ENCODE measurements at regions of chr19 and their contacts with region 1.

Region 1: GRCh38 chr19:47428177-47428894 is 9.0 kb upstream of the MEIS3 start:
- DNase-seq: peak; percentile 89
- CTCF ChIP-seq: no peak

Region 2: DNA sequence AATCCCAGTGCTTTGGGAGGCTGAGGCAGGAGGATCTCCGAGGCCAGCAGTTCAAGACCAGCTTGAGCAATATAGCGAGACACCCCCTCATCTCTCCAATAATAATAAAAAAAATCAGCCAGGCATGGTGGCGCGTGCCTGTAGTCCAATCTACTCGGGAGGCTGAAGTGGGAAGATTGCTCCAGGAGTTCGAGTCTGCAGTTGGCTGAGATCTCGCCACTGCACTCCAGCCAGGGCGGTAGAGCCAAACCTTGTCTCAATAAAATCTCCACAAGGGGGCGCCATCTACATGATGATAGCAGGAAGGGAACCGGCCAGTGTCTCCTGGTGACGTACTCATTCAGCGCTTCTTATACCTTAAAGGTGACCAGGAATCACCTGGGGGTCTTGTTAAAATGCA is 132.3 kb before region 1 on chr19:
- CTCF ChIA-PET with region 1: interaction called, 17 read pairs
- POLR2A ChIA-PET with region 1: no interaction called
- DNase-seq: peak; percentile 83
- CTCF ChIP-seq: peak; percentile 76

Region 3: GRCh38 chr19:47348819-47349795 is 79.2 kb before region 1 on chr19 and contains the start of gene DHX34:
- CTCF ChIA-PET with region 1: interaction called, 20 read pairs
- POLR2A ChIA-PET with region 1: no interaction called
- DNase-seq: peak; percentile 100
- CTCF ChIP-seq: peak; percentile 93

Region 4: DNA sequence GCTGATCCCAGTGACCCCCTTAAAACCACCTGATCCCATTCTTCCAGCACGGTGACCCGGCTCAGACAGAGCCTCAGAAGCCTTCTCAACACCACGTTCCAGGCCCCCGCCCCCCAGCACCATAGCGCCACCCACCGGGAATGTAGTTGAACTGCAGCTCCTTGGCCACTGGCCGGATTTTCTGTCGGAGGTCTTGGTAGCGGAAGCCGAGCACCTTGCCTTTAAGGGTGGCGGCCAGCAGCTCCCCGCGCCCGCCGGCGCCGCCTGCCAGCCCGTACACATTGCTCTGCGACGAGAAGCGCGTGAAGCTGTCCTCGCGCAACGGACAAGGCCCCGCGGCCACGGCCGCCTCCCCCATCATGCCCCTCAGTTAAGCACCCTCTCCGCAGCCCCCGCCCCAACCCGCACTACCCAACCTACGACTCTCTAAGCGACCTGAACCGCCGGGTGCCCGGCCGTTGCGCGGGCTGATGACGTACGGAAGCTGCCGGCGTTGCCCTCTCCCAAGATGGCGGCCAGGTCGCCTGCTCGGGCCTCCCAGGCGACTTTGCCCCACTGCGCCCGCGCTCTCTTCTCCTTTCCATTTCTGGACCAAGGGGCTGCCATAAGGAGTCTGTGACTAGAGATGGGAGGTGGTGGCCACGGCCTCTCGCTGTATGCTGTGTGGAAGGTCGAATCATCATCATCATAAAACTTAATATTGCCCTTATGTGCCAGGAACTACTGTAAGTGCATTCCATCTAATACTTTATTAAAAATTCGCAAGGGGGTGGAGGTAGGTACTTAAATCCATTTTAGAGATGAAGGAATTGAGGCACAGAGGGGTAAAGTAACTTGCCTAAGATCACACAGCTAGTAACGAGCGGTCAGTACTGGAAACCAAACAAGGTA is 55.7 kb after region 1 on chr19 and contains the start of gene KPTN:
- CTCF ChIA-PET with region 1: interaction called, 13 read pairs
- POLR2A ChIA-PET with region 1: no interaction called
- DNase-seq: peak; percentile 96
- CTCF ChIP-seq: peak; percentile 97

Region 5: GRCh38 chr19:47697863-47698609 is 269.7 kb after region 1 on chr19:
- CTCF ChIA-PET with region 1: interaction called, 288 read pairs
- POLR2A ChIA-PET with region 1: no interaction called
- DNase-seq: peak; percentile 85
- CTCF ChIP-seq: peak; percentile 95

Region 6: DNA sequence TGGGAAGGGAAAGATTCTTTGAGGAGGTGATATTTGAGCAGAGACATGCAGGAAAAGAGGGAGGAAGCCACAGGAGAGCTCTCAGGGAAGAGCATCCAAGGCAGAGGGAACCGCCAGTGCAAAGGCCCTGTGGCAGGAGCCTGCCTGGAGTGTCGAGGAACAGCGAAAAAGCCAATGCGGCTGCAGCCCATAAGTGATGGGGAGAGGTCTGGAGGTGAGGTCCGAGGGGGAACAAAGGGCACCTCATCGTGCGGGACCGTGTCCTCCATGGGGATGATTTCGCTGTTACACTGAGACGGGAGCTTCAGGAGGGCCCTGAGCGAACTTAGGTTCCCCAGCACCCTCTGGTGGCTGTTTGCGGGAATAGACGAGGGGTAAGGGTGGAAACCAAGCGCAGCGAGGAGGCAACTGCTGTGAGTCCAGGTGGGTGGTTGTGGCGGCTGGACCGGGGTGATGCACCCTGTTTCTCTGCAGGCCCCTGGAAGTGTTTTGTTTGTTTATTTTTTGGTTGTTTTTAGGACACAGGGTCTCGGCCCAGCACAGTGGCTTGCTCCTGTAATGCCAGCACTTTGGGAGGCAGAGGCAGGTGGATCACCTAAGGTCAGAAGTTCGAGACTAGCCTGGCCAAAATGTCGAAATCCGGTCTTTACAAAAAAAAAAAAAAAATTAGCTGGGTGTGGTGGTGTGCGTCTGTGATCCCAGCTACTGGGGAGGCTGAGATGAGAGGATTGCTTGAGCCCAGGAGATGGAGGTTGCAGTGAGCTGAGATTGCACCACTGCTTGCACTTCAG is 279.0 kb after region 1 on chr19:
- CTCF ChIA-PET with region 1: interaction called, 288 read pairs
- POLR2A ChIA-PET with region 1: no interaction called
- DNase-seq: peak; percentile 77
- CTCF ChIP-seq: peak; percentile 66